Breast epithelium (tissue), 4 donors: ENCODE measurements at regions of chr15 and their contacts with region 1.

Region 1: GRCh38 chr15:26294059-26294689 is 431.0 kb upstream of the ATP10A start:
- DNase-seq: no peak
- H3K4me3 ChIP-seq: no peak overlapping the region
- H3K27ac ChIP-seq: no peak overlapping the region
- H3K4me1 ChIP-seq: no peaks in the 10 kb centered on the region
- H3K27me3 ChIP-seq: peaks cover 0 to 6% of the 10 kb centered on the region in 2 donors
- CTCF ChIP-seq: no peak
- POLR2A ChIP-seq: no peak

Region 2: DNA sequence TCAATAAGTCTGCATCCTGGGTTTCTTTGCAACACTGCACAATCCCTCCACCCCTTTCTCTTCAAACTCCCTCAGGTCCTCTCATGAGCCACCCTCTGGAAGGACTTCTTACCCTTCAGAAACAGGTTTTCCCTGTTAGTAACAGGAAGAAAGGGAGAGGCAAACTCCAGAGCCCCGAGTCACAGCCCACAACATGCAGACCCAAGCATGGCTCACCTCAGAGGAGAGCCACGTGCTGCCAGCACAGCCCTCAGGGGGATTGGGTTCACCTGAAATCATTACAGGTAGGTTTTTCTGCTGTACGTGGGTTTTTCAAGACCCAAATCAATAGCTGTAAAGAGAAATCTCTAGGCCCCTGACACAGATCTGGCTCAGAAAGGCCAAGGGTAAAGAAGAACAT is 71.4 kb before region 1 on chr15:
- intact Hi-C with region 1: no loop called
- DNase-seq: no peak
- H3K4me3 ChIP-seq: no peak overlapping the region
- H3K27ac ChIP-seq: no peak overlapping the region
- H3K4me1 ChIP-seq: no peaks in the 10 kb centered on the region
- H3K27me3 ChIP-seq: no peaks in the 10 kb centered on the region
- CTCF ChIP-seq: no peak
- POLR2A ChIP-seq: no peak

Region 3: DNA sequence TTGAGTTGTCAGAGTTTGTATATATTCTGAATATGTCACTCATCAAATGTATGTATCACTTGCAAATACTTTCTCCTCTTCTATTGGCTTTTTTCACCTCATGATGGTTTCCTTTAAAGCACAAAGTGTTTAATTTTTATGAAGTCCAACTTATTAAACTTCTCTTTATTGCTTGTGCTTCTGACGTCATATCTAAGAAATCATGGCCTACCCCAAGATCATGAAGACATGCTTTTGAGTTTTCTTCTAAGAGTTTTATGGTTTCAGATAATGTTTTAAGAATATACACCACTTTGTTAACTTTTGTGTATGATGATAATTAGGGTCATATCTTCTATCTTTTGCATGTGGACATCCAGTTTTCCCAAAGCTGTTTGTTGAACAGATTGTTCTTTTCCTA is 13.9 kb before region 1 on chr15:
- intact Hi-C with region 1: loop called (anchors 1 kb)
- DNase-seq: no peak
- H3K4me3 ChIP-seq: no peak overlapping the region
- H3K27ac ChIP-seq: no peak overlapping the region
- H3K4me1 ChIP-seq: no peaks in the 10 kb centered on the region
- H3K27me3 ChIP-seq: no peaks in the 10 kb centered on the region
- CTCF ChIP-seq: no peak
- POLR2A ChIP-seq: no peak

Region 4: GRCh38 chr15:27660676-27661075 is 1366.5 kb after region 1 on chr15:
- intact Hi-C with region 1: no loop called
- DNase-seq: no peak
- H3K4me3 ChIP-seq: no peak overlapping the region
- H3K27ac ChIP-seq: no peak overlapping the region
- H3K4me1 ChIP-seq: no peaks in the 10 kb centered on the region
- H3K27me3 ChIP-seq: no peaks in the 10 kb centered on the region
- CTCF ChIP-seq: no peak
- POLR2A ChIP-seq: no peak